Right cardiac atrium (tissue), 5 donors: ENCODE measurements at regions of chr22 and their contacts with region 1.

Region 1: DNA sequence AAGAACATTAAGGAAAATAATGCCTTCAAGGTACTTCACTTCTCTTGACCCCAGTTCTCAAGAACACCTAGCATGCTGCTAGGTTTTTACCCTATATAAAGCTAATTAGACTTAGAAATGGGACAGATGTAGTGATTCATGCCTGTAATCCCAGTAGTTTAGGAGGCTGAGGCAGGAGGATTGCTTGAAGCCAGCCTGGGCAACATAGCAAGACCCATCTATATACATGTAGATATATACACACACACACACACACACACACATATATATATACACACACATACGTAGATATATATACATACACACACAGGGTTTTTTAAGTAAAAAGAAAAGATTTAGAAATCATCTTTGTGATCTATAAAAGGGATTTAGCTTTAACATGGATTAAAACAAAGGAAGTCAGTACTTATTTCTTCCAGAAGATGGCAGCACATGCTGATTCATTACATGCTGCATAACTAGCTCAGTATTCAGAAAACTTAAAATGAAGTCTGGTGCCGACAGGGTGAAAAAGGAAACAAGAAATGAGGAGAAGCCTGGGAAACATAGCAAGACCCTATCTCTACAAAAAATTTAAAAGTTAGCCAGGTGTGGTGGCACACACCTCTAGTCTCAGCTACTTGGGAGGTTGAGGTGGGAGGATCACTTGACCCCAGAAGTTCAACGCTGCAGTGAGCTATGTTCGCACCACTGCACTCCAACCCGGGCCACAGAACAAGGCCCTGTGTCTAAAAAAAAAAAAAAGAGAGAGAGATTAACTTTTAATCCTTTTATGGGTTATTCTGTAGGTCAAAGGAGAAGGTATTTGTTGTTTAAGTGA is 28.5 kb upstream of the RBX1 start:
- DNase-seq: no peak
- ATAC-seq: peak; percentile 75 to 76
- H3K4me3 ChIP-seq: no peak overlapping the region
- H3K27ac ChIP-seq: no peak overlapping the region
- H3K4me1 ChIP-seq: no peaks in the 10 kb centered on the region
- H3K27me3 ChIP-seq: no peaks in the 10 kb centered on the region

Region 2: DNA sequence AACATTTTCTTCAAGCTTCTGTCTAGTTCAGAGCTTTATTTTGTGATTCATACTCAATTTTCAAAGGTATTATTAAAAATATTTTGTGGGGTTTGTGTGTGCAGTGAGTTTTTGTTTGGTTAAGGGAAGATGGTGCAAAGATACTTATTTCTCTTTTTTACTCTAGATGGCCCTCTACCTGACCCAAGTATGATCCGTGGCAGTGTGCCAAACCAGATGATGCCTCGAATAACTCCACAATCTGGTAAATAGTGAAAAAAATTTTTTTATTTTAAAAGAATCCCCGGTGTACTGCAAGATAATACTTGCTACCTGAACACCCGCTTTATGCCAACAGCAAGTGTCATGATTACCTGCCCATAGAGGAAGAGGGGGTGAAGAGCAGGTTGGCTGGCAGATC is 223.9 kb after region 1 on chr22:
- intact Hi-C with region 1: loop called in 3 of 4 experiments (anchors 10 kb)
- DNase-seq: no peak
- ATAC-seq: no peak
- H3K4me3 ChIP-seq: no peak overlapping the region
- H3K27ac ChIP-seq: no peak overlapping the region
- H3K4me1 ChIP-seq: no peaks in the 10 kb centered on the region
- H3K27me3 ChIP-seq: no peaks in the 10 kb centered on the region

Region 3: GRCh38 chr22:41245917-41246499 is 323.3 kb after region 1 on chr22:
- intact Hi-C with region 1: no loop called
- DNase-seq: no peak
- ATAC-seq: peak in 1 of 2 donors; percentile 5
- H3K4me3 ChIP-seq: no peak overlapping the region
- H3K27ac ChIP-seq: no peak overlapping the region
- H3K4me1 ChIP-seq: no peaks in the 10 kb centered on the region
- H3K27me3 ChIP-seq: no peaks in the 10 kb centered on the region